Dendritic cell treated with granulocyte-macrophage colony-stimulating factor and Interleukin-4, amounts not matched to agents 40 ng/mL and 50 ng/mL, for 4 days (primary cell): ENCODE measurements at regions of chr1 and their contacts with region 1.

Region 1: GRCh38 chr1:46616277-46617107 is at the start of gene MOB3C:
- H3K4me3 Mint-ChIP-seq: peak within 1 kb of the TSS; percentile 85
- H3K27ac Mint-ChIP-seq: peak within 1 kb of the TSS; percentile 92
- H3K4me1 Mint-ChIP-seq: peaks cover 92% of the 10 kb centered on the region
- H3K27me3 Mint-ChIP-seq: no peaks in the 10 kb centered on the region

Region 2: DNA sequence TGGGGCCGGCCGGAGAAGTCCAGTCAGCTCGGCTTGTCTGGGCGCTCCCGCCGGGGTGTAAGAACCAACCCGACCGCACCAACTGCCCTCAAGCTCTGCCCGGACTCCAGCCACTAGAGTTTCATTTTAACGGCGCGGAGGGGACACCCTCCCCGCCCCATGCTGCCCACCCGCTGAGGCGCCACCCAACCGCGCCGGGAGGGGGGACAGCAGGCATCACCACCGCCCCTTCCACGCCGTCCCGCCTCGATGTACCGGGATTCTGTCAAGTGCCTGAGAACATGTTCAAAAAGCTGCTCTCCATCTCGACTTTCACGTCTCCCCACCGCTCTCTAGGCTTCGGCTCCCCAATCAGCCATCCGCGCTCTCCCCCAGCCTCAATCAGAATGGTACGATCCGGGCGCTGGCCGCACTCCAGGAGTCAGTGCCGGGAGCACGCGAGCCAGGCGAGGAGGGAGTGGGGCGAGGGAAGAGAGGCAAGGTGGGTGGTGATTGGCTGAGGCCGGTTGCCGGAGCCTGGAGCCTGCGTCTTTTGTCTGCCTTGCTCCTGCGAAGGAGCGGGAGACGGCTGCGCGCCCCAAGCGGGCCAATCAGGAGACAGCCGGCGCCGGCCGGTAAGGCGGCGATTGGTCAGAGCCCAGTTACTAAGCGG is 483.8 kb before region 1 on chr1 and contains the start of gene PIK3R3:
- intact Hi-C with region 1: no loop called
- H3K4me3 Mint-ChIP-seq: peak within 1 kb of the TSS; percentile 81
- H3K27ac Mint-ChIP-seq: peak within 1 kb of the TSS; percentile 99
- H3K4me1 Mint-ChIP-seq: peaks cover 23% of the 10 kb centered on the region
- H3K27me3 Mint-ChIP-seq: peaks cover 69% of the 10 kb centered on the region

Region 3: DNA sequence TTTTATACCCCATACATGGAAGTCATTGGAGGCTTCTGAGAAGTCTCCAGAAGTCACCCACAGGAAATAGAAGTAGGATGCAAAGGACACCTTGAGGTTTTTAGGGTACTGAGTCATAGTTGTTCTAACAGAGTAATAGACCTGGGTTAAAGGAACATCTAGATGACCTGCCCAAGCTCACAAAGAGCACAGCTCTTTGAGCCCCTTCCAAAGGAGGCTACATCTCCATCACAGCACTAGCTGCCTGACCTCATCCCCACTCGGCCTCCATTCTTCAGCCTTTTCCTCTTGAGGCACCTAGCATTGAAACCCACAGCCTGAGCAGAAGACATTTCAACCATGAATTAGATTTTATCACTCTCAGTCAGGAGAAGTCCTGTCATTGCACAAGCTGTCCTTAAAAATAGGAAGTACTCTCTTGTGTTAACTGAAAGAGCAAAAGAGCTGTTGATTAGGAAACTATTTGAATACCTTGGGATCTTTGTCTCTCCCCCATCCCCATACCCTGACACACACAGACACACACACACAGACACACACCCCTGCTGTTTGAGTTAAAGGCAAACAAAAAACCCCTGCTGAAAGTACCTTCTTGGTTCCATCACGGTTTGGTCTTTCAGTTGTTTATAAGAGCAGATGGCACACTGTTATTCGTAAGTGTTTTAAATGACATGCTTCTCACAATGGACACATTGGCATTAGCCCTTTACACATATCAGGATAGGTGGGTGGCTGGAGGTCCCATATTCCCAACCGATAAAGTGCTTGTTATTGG is 34.6 kb before region 1 on chr1:
- intact Hi-C with region 1: loop called (anchors 5 kb)
- H3K4me3 Mint-ChIP-seq: no peak overlapping the region
- H3K27ac Mint-ChIP-seq: peak overlapping the region; percentile 83
- H3K4me1 Mint-ChIP-seq: peaks cover 68% of the 10 kb centered on the region
- H3K27me3 Mint-ChIP-seq: no peaks in the 10 kb centered on the region

Region 4: GRCh38 chr1:46667782-46668760 is 51.6 kb after region 1 on chr1 and contains the start of gene ATPAF1:
- intact Hi-C with region 1: loop called (anchors 10 kb)
- H3K4me3 Mint-ChIP-seq: no peak within 1 kb of the TSS
- H3K27ac Mint-ChIP-seq: no peak within 1 kb of the TSS
- H3K4me1 Mint-ChIP-seq: peaks cover 18% of the 10 kb centered on the region
- H3K27me3 Mint-ChIP-seq: no peaks in the 10 kb centered on the region

Region 5: GRCh38 chr1:46718727-46719622 is 102.5 kb after region 1 on chr1 and contains the start of gene EFCAB14:
- intact Hi-C with region 1: loop called (anchors 2 kb)
- H3K4me3 Mint-ChIP-seq: peak within 1 kb of the TSS; percentile 85
- H3K27ac Mint-ChIP-seq: peak within 1 kb of the TSS; percentile 95
- H3K4me1 Mint-ChIP-seq: peaks cover 38% of the 10 kb centered on the region
- H3K27me3 Mint-ChIP-seq: no peaks in the 10 kb centered on the region